ENCODE measurements at regions of chr2 and their contacts with region 1.

Region 1: GRCh38 chr2:170973492-170974303 is 44.6 kb downstream of the GORASP2 start:
- DNase-seq: peak; percentile 86 to 91 (median 88)
- H3K4me3 ChIP-seq: peak overlapping the region in 3 of 4 donors; percentile 45 to 77 (median 65)
- H3K27ac ChIP-seq: peak overlapping the region in 3 of 5 donors; percentile 77 to 82 (median 79)
- H3K4me1 ChIP-seq: peaks cover 0 to 9% of the 10 kb centered on the region in 2 donors
- H3K27me3 ChIP-seq: no peaks in the 10 kb centered on the region
- CTCF ChIP-seq: peak; percentile 52 to 99 (median 88)
- POLR2A ChIP-seq: peak in 1 of 2 donors; percentile 37

Region 2: GRCh38 chr2:170576296-170576695 is 397.4 kb before region 1 on chr2:
- intact Hi-C with region 1: no loop called
- DNase-seq: no peak
- H3K4me3 ChIP-seq: no peak overlapping the region
- H3K27ac ChIP-seq: no peak overlapping the region
- H3K4me1 ChIP-seq: no peaks in the 10 kb centered on the region
- H3K27me3 ChIP-seq: peaks cover 4% of the 10 kb centered on the region
- CTCF ChIP-seq: no peak
- POLR2A ChIP-seq: no peak

Region 3: DNA sequence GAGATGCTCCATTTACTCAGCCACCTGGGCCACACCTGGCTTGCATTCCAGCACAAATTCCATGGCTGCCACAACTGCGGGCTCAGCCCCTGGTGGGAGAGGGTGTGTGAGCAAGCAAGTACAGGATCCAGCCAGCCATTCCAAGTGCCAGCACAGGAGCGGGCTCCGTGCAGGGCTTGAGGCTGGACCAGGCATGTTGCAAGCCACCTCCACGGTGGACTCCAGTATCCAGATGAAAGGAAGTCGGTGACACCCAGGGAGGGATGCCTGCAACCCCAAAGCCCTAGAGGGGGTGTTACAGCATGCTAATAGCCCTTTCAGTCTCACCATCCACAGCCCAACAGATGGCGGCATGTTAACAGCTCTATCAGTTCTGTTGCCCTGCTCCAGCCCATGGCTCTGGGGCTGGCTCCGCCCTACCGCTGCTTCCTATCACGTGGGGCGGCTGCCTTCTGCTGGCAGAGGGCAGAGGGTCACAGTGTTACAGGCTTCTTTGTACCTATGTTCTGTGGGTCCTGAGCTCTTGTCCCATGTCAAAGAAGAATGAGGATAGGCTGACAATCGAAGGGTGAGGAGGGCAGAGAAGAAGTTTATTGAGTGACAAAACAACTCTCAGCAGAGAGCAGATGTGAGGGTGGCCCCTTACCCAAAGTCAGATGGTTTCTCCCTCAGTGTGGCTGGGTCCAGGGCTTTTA is 56.3 kb before region 1 on chr2:
- intact Hi-C with region 1: no loop called
- DNase-seq: no peak
- H3K4me3 ChIP-seq: no peak overlapping the region
- H3K27ac ChIP-seq: no peak overlapping the region
- H3K4me1 ChIP-seq: no peaks in the 10 kb centered on the region
- H3K27me3 ChIP-seq: no peaks in the 10 kb centered on the region
- CTCF ChIP-seq: no peak
- POLR2A ChIP-seq: no peak

Region 4: GRCh38 chr2:171160119-171160955 is 186.6 kb after region 1 on chr2 and contains the start of gene TLK1:
- intact Hi-C with region 1: loop called (anchors 2 to 10 kb)
- DNase-seq: peak; percentile 72 to 83 (median 75)
- H3K4me3 ChIP-seq: peak within 1 kb of the TSS; percentile 55 to 88 (median 82)
- H3K27ac ChIP-seq: peak within 1 kb of the TSS; percentile 89 to 99 (median 97)
- H3K4me1 ChIP-seq: peaks cover 10 to 37% of the 10 kb centered on the region in 2 donors
- H3K27me3 ChIP-seq: no peaks in the 10 kb centered on the region
- CTCF ChIP-seq: peak in 1 of 6 experiments; percentile 19
- POLR2A ChIP-seq: peak; percentile 58 to 76
- total RNA-seq, gene TLK1: 25.7 to 84.0 (median 56.0) TPM

Region 5: GRCh38 chr2:171416009-171416926 is 442.6 kb after region 1 on chr2:
- intact Hi-C with region 1: loop called (anchors 5 kb)
- DNase-seq: peak; percentile 90 to 98 (median 96)
- H3K4me3 ChIP-seq: no peak overlapping the region
- H3K27ac ChIP-seq: peak overlapping the region in 1 of 5 donors; percentile 65
- H3K4me1 ChIP-seq: peaks cover 0 to 4% of the 10 kb centered on the region in 2 donors
- H3K27me3 ChIP-seq: no peaks in the 10 kb centered on the region
- CTCF ChIP-seq: peak; percentile 79 to 89 (median 85)
- POLR2A ChIP-seq: peak in 1 of 2 donors; percentile 26

Region 6: DNA sequence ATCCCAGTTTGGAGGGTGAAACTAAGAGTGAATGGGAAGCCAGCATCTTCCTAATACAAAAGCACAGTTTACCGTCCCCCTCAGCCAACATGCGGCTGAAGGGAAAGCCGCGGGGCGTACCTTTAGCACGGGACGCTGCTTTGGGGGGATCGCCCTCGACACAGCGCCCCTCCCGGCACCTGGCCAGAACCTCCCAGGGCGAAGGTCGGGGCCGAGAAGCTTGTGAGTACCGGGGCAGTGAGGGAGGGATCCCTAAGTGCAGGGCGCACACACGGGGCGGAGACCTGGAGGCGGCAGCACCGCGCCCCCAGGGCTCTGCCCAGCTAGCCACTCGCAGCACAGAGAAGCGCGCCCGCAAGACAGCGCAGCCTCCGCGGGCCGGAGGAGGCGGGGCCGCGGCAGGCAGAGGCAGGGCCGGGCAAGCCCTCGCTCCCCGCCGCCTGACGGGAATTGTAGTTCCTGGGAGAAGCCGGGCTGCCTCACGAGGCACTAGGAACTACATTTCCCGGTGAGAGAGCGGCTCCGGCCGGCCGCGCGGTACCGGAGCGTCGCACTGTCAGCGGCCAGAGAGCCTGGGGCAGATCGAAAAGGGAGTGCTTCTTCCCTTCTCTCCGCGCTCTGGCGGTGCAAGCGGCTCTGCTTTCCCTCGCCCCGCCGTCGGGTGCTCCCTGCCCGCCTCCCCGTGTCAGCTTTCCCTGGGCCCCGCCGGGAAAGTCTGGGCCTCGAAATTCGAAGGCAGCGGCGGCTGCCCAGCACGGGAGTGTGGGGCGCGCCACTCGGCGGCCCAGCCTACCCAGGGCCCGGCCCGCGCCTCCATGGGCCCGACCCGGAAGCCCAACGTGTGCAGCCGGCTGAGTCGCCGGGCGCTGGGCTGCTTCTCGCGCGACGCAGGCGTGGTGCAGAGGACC is 460.3 kb after region 1 on chr2 and contains the starts of genes DCAF17 and METTL8:
- intact Hi-C with region 1: loop called in 1 of 2 experiments (anchors 5 kb)
- DNase-seq: peak; percentile 95 to 97 (median 96)
- H3K4me3 ChIP-seq: peak within 1 kb of the TSS; percentile 17 to 98 (median 50)
- H3K27ac ChIP-seq: peak within 1 kb of the TSS; percentile 87 to 99 (median 97)
- H3K4me1 ChIP-seq: peaks cover 7 to 14% of the 10 kb centered on the region in 2 donors
- H3K27me3 ChIP-seq: no peaks in the 10 kb centered on the region
- CTCF ChIP-seq: peak in 3 of 6 experiments; percentile 21 to 35 (median 31)
- POLR2A ChIP-seq: peak; percentile 78 to 82
- total RNA-seq, gene DCAF17: 9.6 to 21.9 (median 18.3) TPM
- total RNA-seq, gene METTL8: 13.8 to 37.5 (median 19.9) TPM

Measured in adrenal gland (tissue), 19 donors.